Dorsolateral prefrontal cortex (tissue), 120 donors: ENCODE measurements at regions of chr11 and their contacts with region 1.

Region 1: GRCh38 chr11:73374151-73374550 is 2.0 kb upstream of the RELT start:
- DNase-seq: no peak
- H3K4me3 ChIP-seq: no peak overlapping the region
- H3K27ac ChIP-seq: peak overlapping the region in 46 of 59 donors; percentile 0 to 96 (median 52)
- H3K27me3 ChIP-seq: no peaks in the 10 kb centered on the region
- CTCF ChIP-seq: no peak

Region 2: GRCh38 chr11:72722050-72722748 is 652.0 kb before region 1 on chr11:
- intact Hi-C with region 1: no loop called
- DNase-seq: peak; percentile 65 to 91 (median 86)
- H3K4me3 ChIP-seq: peak overlapping the region; percentile 12 to 75 (median 62)
- H3K27ac ChIP-seq: peak overlapping the region; percentile 29 to 91 (median 81)
- H3K27me3 ChIP-seq: no peaks in the 10 kb centered on the region
- CTCF ChIP-seq: peak in 6 of 56 donors; percentile 6 to 21 (median 12)

Region 3: GRCh38 chr11:73350908-73351636 is 23.1 kb before region 1 on chr11:
- intact Hi-C with region 1: loop called in 1 of 2 experiments (anchors 2 kb)
- DNase-seq: peak in 4 of 10 donors; percentile 49 to 79 (median 60)
- H3K4me3 ChIP-seq: peak overlapping the region in 15 of 59 donors; percentile 1 to 31 (median 14)
- H3K27ac ChIP-seq: peak overlapping the region in 9 of 59 donors; percentile 1 to 59 (median 31)
- H3K27me3 ChIP-seq: no peaks in the 10 kb centered on the region
- CTCF ChIP-seq: peak; percentile 90 to 100 (median 97)